ENCODE measurements at regions of chr4 and their contacts with region 1.

Region 1: GRCh38 chr4:3369781-3370674 is 71.7 kb upstream of the HGFAC start:
- DNase-seq: no peak
- ATAC-seq: no peak
- H3K4me3 ChIP-seq: no peak overlapping the region
- H3K4me3 Mint-ChIP-seq: peak overlapping the region; percentile 18
- H3K27ac ChIP-seq: no peak overlapping the region
- H3K27ac Mint-ChIP-seq: no peak overlapping the region
- H3K4me1 ChIP-seq: peaks cover 28 to 42% of the 10 kb centered on the region in 2 donors
- H3K4me1 Mint-ChIP-seq: peaks cover 35% of the 10 kb centered on the region
- H3K27me3 ChIP-seq: peaks cover 0 to 25% (median 3%) of the 10 kb centered on the region in 4 experiments
- H3K27me3 Mint-ChIP-seq: peaks cover 10% of the 10 kb centered on the region
- CTCF ChIP-seq: no peak

Region 2: DNA sequence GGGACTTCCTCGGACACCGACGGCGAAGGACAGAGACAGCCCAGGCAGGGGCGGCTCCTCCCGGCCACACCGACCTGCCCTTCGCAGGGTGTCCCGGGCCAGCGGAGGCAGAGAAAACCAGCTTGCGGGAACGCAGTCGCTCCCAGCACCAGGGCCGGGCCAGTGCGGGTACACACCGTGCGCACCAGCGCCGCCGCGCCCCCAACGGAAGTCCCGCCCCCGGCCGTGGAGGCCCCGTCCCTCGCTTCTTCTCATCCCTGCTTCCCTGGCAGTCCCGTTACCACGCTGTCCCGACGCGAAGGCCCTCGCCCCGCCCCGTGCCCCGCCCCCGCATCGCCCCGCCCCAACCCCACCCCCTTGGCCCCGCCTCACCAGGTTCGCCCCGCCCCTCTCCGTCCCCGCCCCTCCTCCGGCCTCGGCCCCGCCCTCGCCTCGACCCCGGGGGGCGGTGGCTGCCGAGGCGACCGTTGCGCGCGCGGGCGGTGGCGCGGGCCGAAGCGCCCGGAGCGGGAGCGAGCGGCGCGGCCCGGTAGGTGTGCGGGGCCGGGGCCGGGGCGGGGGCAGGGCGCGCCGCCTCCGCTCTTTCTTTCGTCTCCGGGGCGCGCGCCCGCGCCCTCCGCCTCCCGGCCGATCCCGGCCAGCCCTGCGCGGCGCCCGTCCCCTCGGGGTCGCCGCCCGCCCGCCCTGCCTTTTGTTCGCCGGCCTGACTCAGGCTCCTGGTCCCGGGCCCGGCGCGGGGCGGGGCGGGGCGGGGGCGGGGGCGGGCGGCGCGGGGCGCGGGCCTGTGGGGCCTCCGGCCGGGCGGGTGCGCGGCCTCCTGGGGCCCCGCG is 77.2 kb before region 1 on chr4 and contains the start of gene RGS12:
- CTCF ChIA-PET with region 1: no interaction called
- POLR2A ChIA-PET with region 1: no interaction called
- intact Hi-C with region 1: no loop called
- DNase-seq: peak; percentile 82
- ATAC-seq: peak; percentile 82
- H3K4me3 ChIP-seq: peak within 1 kb of the TSS; percentile 8 to 80 (median 72)
- H3K4me3 Mint-ChIP-seq: peak within 1 kb of the TSS; percentile 89
- H3K27ac ChIP-seq: peak within 1 kb of the TSS in 1 of 2 donors; percentile 48
- H3K27ac Mint-ChIP-seq: peak within 1 kb of the TSS; percentile 81
- H3K4me1 ChIP-seq: peaks cover 7 to 17% of the 10 kb centered on the region in 2 donors
- H3K4me1 Mint-ChIP-seq: peaks cover 13% of the 10 kb centered on the region
- H3K27me3 ChIP-seq: peaks cover 0 to 20% (median 3%) of the 10 kb centered on the region in 4 experiments
- H3K27me3 Mint-ChIP-seq: peaks cover 14% of the 10 kb centered on the region
- CTCF ChIP-seq: no peak
- total RNA-seq, gene RGS12: 13.1 and 13.9 TPM in 2 replicates

Region 3: GRCh38 chr4:3346146-3346545 is 23.9 kb before region 1 on chr4:
- CTCF ChIA-PET with region 1: interaction called, 21 read pairs
- POLR2A ChIA-PET with region 1: no interaction called
- intact Hi-C with region 1: loop called (anchors 2 kb)
- DNase-seq: peak; percentile 82
- ATAC-seq: peak; percentile 70
- H3K4me3 ChIP-seq: no peak overlapping the region
- H3K4me3 Mint-ChIP-seq: no peak overlapping the region
- H3K27ac ChIP-seq: no peak overlapping the region
- H3K27ac Mint-ChIP-seq: no peak overlapping the region
- H3K4me1 ChIP-seq: peaks cover 0 to 4% of the 10 kb centered on the region in 2 donors
- H3K4me1 Mint-ChIP-seq: peaks cover 7% of the 10 kb centered on the region
- H3K27me3 ChIP-seq: no peaks in the 10 kb centered on the region
- H3K27me3 Mint-ChIP-seq: no peaks in the 10 kb centered on the region
- CTCF ChIP-seq: peak; percentile 99

Region 4: DNA sequence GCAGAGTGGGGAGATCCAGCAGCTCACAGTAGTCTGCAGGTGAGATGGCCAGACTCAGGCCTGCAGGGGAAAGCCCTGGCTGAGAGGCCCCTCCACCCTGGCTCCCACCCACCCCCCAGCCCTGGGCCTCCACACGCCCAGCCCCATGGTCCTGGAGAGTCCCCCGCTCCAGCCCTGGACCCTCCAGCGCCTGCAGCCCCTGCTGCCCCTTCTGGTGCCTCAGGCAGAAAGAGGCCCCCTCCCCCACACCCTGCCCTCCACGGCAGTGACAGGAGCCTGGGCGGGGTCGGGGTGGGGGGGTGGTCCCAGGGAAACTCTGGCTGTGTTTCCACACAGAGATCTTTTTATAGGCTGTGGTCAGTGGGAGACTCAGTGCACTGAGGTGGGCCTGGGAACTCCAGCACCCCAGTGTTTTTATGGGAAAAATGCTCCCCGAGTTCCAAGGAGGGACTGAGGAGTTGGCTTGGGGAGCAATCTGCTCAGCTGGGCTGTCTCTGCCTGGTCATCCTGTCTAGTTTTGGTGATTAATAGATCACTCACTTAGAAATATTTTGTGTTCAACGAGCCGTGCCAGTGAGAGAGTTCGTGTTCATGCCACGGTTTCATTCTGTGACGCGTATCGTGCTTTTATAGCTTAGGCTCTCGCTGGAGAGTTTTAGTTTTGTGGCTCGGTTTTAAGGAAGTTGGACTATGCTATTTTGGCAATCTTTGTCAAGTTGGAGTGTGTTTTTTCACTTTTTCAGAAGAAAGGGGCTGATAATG is 18.6 kb after region 1 on chr4:
- CTCF ChIA-PET with region 1: interaction called, 3 read pairs
- POLR2A ChIA-PET with region 1: interaction called, 4 read pairs
- intact Hi-C with region 1: loop called (anchors 2 kb)
- DNase-seq: peak; percentile 75
- ATAC-seq: peak; percentile 67
- H3K4me3 ChIP-seq: peak overlapping the region in 4 of 5 experiments; percentile 13 to 58 (median 34)
- H3K4me3 Mint-ChIP-seq: peak overlapping the region; percentile 94
- H3K27ac ChIP-seq: peak overlapping the region; percentile 17 to 45
- H3K27ac Mint-ChIP-seq: peak overlapping the region; percentile 88
- H3K4me1 ChIP-seq: peaks cover 37 to 52% of the 10 kb centered on the region in 2 donors
- H3K4me1 Mint-ChIP-seq: peaks cover 48% of the 10 kb centered on the region
- H3K27me3 ChIP-seq: peaks cover 0 to 17% (median 3%) of the 10 kb centered on the region in 4 experiments
- H3K27me3 Mint-ChIP-seq: peaks cover 5% of the 10 kb centered on the region
- CTCF ChIP-seq: no peak